PC-3 (cell line): ENCODE measurements at regions of chr15 and their contacts with region 1.

Region 1: GRCh38 chr15:77186594-77187011 is 115.7 kb upstream of the TSPAN3 start:
- DNase-seq: peak; percentile 30
- ATAC-seq: no peak
- H3K4me3 ChIP-seq: no peak overlapping the region
- H3K27ac ChIP-seq: no peak overlapping the region
- H3K4me1 ChIP-seq: peaks cover 7% of the 10 kb centered on the region
- H3K27me3 ChIP-seq: no peaks in the 10 kb centered on the region
- CTCF ChIP-seq: peak; percentile 68

Region 2: GRCh38 chr15:77482570-77482969 is 296.0 kb after region 1 on chr15:
- CTCF ChIA-PET with region 1: interaction called, 3 read pairs
- POLR2A ChIA-PET with region 1: no interaction called
- intact Hi-C with region 1: loop called (anchors 5 kb)
- DNase-seq: peak; percentile 63
- ATAC-seq: peak; percentile 69
- H3K4me3 ChIP-seq: no peak overlapping the region
- H3K27ac ChIP-seq: no peak overlapping the region
- H3K4me1 ChIP-seq: peaks cover 17% of the 10 kb centered on the region; the same call in 1 of the 2 replicates
- H3K27me3 ChIP-seq: no peaks in the 10 kb centered on the region
- CTCF ChIP-seq: no peak

Region 3: GRCh38 chr15:77496710-77497103 is 310.1 kb after region 1 on chr15:
- CTCF ChIA-PET with region 1: interaction called, 5 read pairs
- POLR2A ChIA-PET with region 1: no interaction called
- intact Hi-C with region 1: loop called (anchors 1 kb)
- DNase-seq: peak; percentile 76
- ATAC-seq: peak; percentile 85
- H3K4me3 ChIP-seq: peak overlapping the region; percentile 32; the same call in 1 of the 2 replicates
- H3K27ac ChIP-seq: no peak overlapping the region
- H3K4me1 ChIP-seq: no peaks in the 10 kb centered on the region; the same call in 1 of the 2 replicates
- H3K27me3 ChIP-seq: no peaks in the 10 kb centered on the region
- CTCF ChIP-seq: peak; percentile 91

Region 4: DNA sequence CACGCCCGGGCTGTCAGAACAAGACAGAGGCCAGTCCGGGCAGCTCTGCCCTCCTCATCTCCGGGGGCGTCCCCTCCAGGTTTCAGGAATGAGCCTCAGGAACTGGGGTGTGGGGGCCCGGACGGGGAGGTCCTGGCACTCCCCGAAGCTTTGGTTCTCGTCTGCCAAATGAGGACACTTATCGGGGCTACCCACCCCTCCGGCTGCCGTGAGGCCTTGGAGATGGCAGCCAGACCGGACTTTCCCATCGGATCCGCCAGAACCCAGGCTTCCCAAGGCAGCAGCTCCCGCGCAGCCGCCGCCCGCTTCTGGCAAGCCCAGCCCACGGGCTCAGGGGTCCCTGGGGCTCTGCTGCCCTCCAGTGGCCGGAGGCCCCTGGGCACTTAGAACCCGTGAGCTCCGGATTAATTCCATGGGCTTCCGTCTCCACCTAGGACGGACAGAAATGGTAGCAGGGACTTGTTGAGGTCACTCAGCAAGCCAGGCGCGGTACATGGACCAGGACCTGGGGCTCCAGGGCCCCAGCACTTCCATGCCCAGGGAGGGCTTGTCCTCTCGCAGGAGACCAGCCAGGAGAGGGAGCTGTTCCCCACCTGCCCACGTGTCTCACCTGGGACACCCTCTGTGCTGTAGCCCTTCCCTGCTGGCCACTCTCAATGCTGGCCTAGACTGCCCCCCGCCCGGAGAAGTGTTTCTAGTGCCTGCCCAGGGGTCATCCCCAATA is 356.7 kb after region 1 on chr15:
- CTCF ChIA-PET with region 1: interaction called, 11 read pairs
- POLR2A ChIA-PET with region 1: no interaction called
- intact Hi-C with region 1: loop called (anchors 1 kb)
- DNase-seq: peak; percentile 87
- ATAC-seq: peak; percentile 84
- H3K4me3 ChIP-seq: peak overlapping the region; percentile 66
- H3K27ac ChIP-seq: peak overlapping the region; percentile 55
- H3K4me1 ChIP-seq: peaks cover 30% of the 10 kb centered on the region
- H3K27me3 ChIP-seq: no peaks in the 10 kb centered on the region
- CTCF ChIP-seq: peak; percentile 99